Endothelial cell of umbilical vein (primary cell): ENCODE measurements at regions of chr10 and their contacts with region 1.

Region 1: GRCh38 chr10:34655286-34656170 is 159.6 kb downstream of the PARD3 start:
- DNase-seq: peak; percentile 86
- H3K4me3 ChIP-seq: no peak overlapping the region
- H3K27ac ChIP-seq: no peak overlapping the region
- H3K4me1 ChIP-seq: no peaks in the 10 kb centered on the region
- H3K27me3 ChIP-seq: no peaks in the 10 kb centered on the region
- CTCF ChIP-seq: peak; percentile 53 to 64
- POLR2A ChIP-seq: no peak

Region 2: DNA sequence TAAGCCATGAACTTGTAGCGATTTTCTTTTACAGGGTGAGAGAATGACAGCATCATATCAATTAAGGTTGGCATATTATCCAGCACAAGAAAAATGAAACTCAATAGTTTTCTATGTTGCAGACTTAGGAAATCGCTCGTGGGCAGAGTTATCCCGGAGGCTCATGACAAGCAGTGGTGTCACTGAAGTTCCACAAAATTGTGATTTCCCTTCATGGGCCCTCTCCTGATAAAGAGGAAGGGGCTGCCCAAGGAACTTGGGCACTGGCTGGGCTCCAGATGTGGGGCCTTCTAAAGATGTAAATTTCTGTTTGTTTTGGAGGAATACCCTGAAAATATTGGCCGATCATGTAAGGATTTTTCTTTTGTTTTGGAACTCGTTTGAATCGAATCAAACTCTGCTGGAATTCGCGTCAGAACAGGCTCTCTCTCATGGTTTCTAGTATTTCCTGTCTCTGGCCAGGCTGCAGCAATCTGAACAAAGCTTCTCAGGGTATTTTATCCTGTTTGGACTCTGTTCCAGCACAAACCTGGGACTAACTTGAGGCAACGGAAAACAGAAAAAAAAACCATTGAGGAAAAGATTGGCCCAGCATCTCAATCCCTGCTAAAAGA is 980.4 kb before region 1 on chr10:
- CTCF ChIA-PET with region 1: no interaction called
- POLR2A ChIA-PET with region 1: no interaction called
- dilution Hi-C with region 1: no loop called
- intact Hi-C with region 1: no loop called
- DNase-seq: peak; percentile 79
- H3K4me3 ChIP-seq: peak overlapping the region in 2 of 3 experiments; percentile 10 to 11
- H3K27ac ChIP-seq: no peak overlapping the region
- H3K4me1 ChIP-seq: peaks cover 6% of the 10 kb centered on the region
- H3K27me3 ChIP-seq: peaks cover 5% of the 10 kb centered on the region in 2 experiments
- CTCF ChIP-seq: no peak
- POLR2A ChIP-seq: no peak

Region 3: DNA sequence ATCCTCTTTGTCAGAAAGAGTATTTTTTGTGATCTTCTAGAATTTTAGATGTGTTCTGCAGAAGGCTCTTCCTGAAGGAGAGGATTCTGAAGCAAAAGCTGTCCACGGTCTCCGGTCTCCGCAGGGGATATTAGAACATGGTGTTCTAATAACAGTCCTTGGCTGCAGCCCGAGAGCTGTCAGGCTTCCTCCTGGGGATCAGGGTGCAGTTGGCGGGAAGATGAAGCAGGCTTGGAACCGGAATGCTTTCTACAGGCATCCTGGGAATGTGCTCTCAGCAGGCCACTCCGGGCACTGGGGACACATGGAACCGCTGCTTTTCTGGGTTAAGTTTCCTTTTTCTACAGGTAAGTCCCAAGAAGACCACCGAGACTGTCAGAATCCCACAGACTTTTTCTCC is 278.1 kb after region 1 on chr10:
- CTCF ChIA-PET with region 1: interaction called, 14 read pairs
- POLR2A ChIA-PET with region 1: no interaction called
- dilution Hi-C with region 1: no loop called
- intact Hi-C with region 1: no loop called
- DNase-seq: no peak
- H3K4me3 ChIP-seq: no peak overlapping the region
- H3K27ac ChIP-seq: no peak overlapping the region
- H3K4me1 ChIP-seq: peaks cover 4% of the 10 kb centered on the region
- H3K27me3 ChIP-seq: no peaks in the 10 kb centered on the region
- CTCF ChIP-seq: no peak
- POLR2A ChIP-seq: no peak